A549 (cell line): ENCODE measurements at regions of chr17 and their contacts with region 1.

Region 1: GRCh38 chr17:69607162-69607834 is 192.8 kb downstream of the MAP2K6 start:
- DNase-seq: peak; percentile 54 to 85
- ATAC-seq: peak; percentile 81 to 86
- H3K4me3 ChIP-seq: no peak overlapping the region
- H3K27ac ChIP-seq: peak overlapping the region; percentile 79 to 88
- H3K4me1 ChIP-seq: peaks cover 31% of the 10 kb centered on the region
- CTCF ChIP-seq: peak; percentile 96
- EP300 ChIP-seq: no peak
- POLR2A ChIP-seq: no peak
- RAD21 ChIP-seq: peak; percentile 92 to 94

Region 2: GRCh38 chr17:69473841-69474831 is 133.2 kb before region 1 on chr17:
- CTCF ChIA-PET with region 1: no interaction called
- POLR2A ChIA-PET with region 1: no interaction called
- DNase-seq: peak in 1 of 2 experiments; percentile 54
- ATAC-seq: peak; percentile 87 to 90
- H3K4me3 ChIP-seq: no peak overlapping the region
- H3K27ac ChIP-seq: peak overlapping the region; percentile 51 to 84
- H3K4me1 ChIP-seq: peaks cover 22% of the 10 kb centered on the region
- CTCF ChIP-seq: no peak
- EP300 ChIP-seq: 0 out of 5 replicates have a peak, but pooled peaks of 1 of the 2 experiments have one; percentile 34
- POLR2A ChIP-seq: no peak
- RAD21 ChIP-seq: no peak

Region 3: DNA sequence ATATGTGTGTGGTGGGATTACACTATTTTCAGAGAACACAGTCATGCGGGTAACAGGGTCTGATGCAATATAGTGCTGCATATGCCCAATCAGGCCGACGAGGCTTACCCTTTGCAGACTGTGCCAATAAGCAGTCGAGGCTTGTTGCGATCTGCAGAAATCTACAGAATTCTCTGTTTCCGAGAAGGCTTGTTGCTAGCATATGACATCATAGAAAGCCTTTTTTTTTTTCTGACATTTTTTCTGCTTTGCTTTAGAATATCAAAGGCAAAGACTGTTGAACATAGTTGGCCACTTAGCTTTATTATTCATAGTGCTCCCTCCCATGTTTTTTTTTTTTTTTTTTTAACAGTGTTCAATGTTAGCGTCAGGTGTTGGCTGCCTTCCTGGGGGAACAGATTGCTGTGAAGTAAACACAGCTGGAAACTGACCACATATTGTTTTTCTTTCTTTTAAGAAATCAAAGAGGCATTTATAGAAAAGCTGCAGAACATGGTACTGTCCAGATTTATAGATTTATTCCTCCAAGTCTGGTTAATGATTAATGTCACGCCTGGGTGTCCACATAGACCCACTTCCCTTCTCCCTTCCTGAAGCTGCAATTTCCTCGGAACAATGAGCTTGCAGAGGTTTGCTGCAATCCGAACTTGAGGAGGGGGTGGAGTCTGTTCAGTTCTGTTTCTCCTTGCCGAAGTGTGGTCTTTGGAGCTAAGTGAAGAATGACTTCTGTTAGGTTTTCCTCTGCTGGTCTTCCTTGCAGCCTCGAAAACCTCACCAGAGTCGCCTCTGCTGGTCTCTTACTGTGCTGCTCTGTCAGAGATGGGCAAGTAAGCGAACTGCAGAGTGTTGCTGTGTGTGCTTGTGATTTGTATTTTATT is 105.5 kb before region 1 on chr17:
- CTCF ChIA-PET with region 1: no interaction called
- POLR2A ChIA-PET with region 1: no interaction called
- DNase-seq: peak; percentile 37 to 63
- ATAC-seq: peak; percentile 91 to 92
- H3K4me3 ChIP-seq: peak overlapping the region; percentile 30
- H3K27ac ChIP-seq: peak overlapping the region; percentile 55 to 84
- H3K4me1 ChIP-seq: peaks cover 34% of the 10 kb centered on the region
- CTCF ChIP-seq: no peak
- EP300 ChIP-seq: no peak
- POLR2A ChIP-seq: no peak
- RAD21 ChIP-seq: no peak

Region 4: DNA sequence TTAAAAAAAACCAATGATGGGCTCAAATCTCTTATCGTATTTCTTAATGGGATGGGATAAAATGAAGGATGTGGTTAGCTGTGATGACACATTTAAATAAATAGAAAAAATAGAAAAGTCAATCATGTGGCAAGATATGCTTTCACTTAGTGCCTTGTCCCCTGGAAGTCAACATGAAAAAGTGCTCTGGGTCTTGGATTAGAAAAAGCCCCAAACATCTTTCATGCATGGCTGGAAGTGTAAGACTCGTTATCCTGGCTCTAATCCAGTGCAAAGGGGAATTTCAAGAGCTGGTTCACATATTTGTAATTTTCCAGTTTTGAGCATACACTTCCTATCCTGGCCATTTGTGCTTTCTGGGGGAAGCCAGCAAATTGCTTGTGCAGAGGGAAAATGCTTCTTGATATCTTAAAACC is 31.9 kb before region 1 on chr17:
- CTCF ChIA-PET with region 1: interaction called, 26 read pairs
- POLR2A ChIA-PET with region 1: no interaction called
- DNase-seq: peak in 1 of 2 experiments; percentile 27
- ATAC-seq: no peak; a peak in 1 of 6 replicates
- H3K4me3 ChIP-seq: no peak overlapping the region
- H3K27ac ChIP-seq: peak overlapping the region; percentile 65 to 80
- H3K4me1 ChIP-seq: peaks cover 39% of the 10 kb centered on the region
- CTCF ChIP-seq: no peak
- EP300 ChIP-seq: no peak
- POLR2A ChIP-seq: no peak
- RAD21 ChIP-seq: no peak

Region 5: GRCh38 chr17:69592692-69593350 is 14.5 kb before region 1 on chr17:
- CTCF ChIA-PET with region 1: interaction called, 31 read pairs
- POLR2A ChIA-PET with region 1: no interaction called
- DNase-seq: no peak
- ATAC-seq: peak in 1 of 2 experiments; percentile 33; a peak in 1 of 6 replicates
- H3K4me3 ChIP-seq: no peak overlapping the region
- H3K27ac ChIP-seq: no peak overlapping the region
- H3K4me1 ChIP-seq: peaks cover 8% of the 10 kb centered on the region; the same call in 1 of the 3 replicates
- CTCF ChIP-seq: no peak
- EP300 ChIP-seq: no peak
- POLR2A ChIP-seq: no peak
- RAD21 ChIP-seq: no peak

Region 6: GRCh38 chr17:70137451-70138230 is 530.3 kb after region 1 on chr17:
- CTCF ChIA-PET with region 1: interaction called, 28 read pairs
- POLR2A ChIA-PET with region 1: no interaction called
- DNase-seq: peak; percentile 42 to 62
- ATAC-seq: peak; percentile 92 to 94
- H3K4me3 ChIP-seq: peak overlapping the region; percentile 30
- H3K27ac ChIP-seq: peak overlapping the region; percentile 70 to 79
- H3K4me1 ChIP-seq: peaks cover 42% of the 10 kb centered on the region
- CTCF ChIP-seq: no peak
- EP300 ChIP-seq: peak in 1 of 2 experiments; percentile 12; a peak in 1 of 5 replicates
- POLR2A ChIP-seq: no peak
- RAD21 ChIP-seq: peak in 1 of 2 experiments; percentile 19; a peak in 2 of 5 replicates

Region 7: DNA sequence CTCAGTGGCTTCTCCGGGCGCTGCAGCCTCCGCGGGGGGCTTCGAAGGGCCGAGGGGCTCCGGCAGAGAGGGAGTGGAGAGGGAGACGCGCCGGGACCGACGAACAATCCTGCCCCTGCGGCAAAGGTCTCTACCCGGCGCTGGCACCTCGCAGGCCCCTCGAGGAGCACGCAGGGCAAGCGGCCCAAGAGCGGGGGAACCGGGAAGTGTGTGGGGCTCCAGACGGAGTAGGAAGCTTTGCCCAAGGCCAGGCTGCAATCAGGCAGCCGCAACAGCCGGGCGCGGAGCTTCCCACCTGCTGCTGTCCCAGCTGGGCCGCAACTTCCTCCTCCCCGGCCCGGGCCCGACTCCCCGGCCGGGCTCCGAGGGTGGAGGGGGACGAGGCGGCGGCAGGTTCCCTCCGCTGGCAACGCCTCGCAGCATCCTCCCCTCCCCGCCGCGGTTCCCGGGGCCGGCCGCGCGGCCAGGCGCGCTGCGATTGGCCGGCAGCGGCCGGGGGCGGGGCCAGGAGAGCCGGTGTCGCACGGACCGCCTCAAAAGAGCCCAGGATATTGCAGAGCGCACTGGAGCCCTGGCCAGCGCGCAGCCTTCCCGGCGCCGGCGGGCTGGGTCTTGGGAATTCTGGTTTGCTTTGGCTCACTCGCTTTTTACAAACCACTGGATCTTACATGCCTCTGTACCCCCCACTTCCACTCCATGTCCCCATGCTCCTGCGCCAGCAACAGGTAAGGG is 561.8 kb after region 1 on chr17 and contains the start of gene KCNJ2:
- CTCF ChIA-PET with region 1: interaction called, 15 read pairs
- POLR2A ChIA-PET with region 1: no interaction called
- DNase-seq: peak; percentile 68 to 85
- ATAC-seq: peak; percentile 92 to 97
- H3K4me3 ChIP-seq: peak within 1 kb of the TSS; percentile 54
- H3K27ac ChIP-seq: peak within 1 kb of the TSS; percentile 61 to 80
- H3K4me1 ChIP-seq: peaks cover 10% of the 10 kb centered on the region
- CTCF ChIP-seq: no peak
- EP300 ChIP-seq: no peak
- POLR2A ChIP-seq: peak; percentile 48
- RAD21 ChIP-seq: 0 out of 5 replicates have a peak, but pooled peaks of 1 of the 2 experiments have one; percentile 9
- polyA plus RNA-seq, gene KCNJ2: 0.14 and 0.40 TPM in 2 replicates